CD4-positive, alpha-beta memory T cell (primary cell): ENCODE measurements at regions of chr7 and their contacts with region 1.

Region 1: DNA sequence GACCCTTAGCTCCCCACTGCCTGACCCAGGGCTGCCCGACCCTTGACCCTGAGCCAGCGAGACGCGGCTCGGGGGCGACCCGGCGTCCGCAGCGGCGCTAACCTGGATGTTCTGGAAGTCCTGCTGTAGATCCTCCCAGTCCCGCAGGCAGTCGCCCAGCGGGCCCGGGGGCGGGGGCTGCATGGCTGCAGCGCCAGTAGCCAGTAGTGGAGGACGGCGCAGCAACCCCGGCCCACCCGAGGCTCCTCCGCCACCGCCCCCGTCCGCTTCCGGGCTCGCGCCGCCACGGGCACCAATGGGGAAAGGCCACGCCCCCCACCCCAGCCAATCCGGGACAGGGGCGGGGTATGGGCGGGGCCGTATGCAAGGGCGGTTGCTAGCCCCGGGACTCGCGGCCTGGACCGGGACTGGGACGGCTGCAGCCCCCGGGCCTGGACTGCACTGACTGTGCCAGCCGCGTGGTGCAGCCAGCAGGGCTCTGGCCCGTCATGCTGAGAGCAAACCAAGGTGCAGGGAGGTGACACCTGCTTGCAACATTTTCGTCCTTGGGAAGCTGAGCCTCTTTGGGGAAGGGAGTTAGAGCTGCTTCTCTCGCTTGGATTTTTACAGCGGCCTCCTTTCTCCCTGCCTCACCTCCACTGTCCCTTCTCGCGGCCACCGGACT is at the start of gene TMEM120A:
- DNase-seq: peak; percentile 90 to 93 (median 91)
- H3K4me3 ChIP-seq: peak within 1 kb of the TSS; percentile 28 to 92
- H3K4me3 Mint-ChIP-seq: peak within 1 kb of the TSS; percentile 66 to 82 (median 78)
- H3K27ac ChIP-seq: peak within 1 kb of the TSS; percentile 62
- H3K27ac Mint-ChIP-seq: peak within 1 kb of the TSS in 4 of 7 donors; percentile 15 to 81 (median 44)
- H3K4me1 ChIP-seq: peaks cover 26% of the 10 kb centered on the region
- H3K4me1 Mint-ChIP-seq: peaks cover 17 to 45% (median 29%) of the 10 kb centered on the region in 4 donors
- H3K27me3 ChIP-seq: no peaks in the 10 kb centered on the region
- H3K27me3 Mint-ChIP-seq: no peaks in the 10 kb centered on the region
- total RNA-seq, gene TMEM120A: 27.4 to 31.2 TPM

Region 2: GRCh38 chr7:75866489-75867389 is 127.8 kb before region 1 on chr7:
- CTCF ChIA-PET with region 1: interaction called, 3 read pairs
- POLR2A ChIA-PET with region 1: no interaction called
- intact Hi-C with region 1: loop called (anchors 1 kb)
- DNase-seq: peak in 4 of 5 donors; percentile 36 to 44 (median 41)
- H3K4me3 ChIP-seq: no peak overlapping the region
- H3K4me3 Mint-ChIP-seq: no peak overlapping the region
- H3K27ac ChIP-seq: no peak overlapping the region
- H3K27ac Mint-ChIP-seq: no peak overlapping the region
- H3K4me1 ChIP-seq: no peaks in the 10 kb centered on the region
- H3K4me1 Mint-ChIP-seq: peaks cover 5 to 10% (median 8%) of the 10 kb centered on the region in 4 donors
- H3K27me3 ChIP-seq: no peaks in the 10 kb centered on the region
- H3K27me3 Mint-ChIP-seq: peaks cover 7 to 12% of the 10 kb centered on the region in 2 donors

Region 3: DNA sequence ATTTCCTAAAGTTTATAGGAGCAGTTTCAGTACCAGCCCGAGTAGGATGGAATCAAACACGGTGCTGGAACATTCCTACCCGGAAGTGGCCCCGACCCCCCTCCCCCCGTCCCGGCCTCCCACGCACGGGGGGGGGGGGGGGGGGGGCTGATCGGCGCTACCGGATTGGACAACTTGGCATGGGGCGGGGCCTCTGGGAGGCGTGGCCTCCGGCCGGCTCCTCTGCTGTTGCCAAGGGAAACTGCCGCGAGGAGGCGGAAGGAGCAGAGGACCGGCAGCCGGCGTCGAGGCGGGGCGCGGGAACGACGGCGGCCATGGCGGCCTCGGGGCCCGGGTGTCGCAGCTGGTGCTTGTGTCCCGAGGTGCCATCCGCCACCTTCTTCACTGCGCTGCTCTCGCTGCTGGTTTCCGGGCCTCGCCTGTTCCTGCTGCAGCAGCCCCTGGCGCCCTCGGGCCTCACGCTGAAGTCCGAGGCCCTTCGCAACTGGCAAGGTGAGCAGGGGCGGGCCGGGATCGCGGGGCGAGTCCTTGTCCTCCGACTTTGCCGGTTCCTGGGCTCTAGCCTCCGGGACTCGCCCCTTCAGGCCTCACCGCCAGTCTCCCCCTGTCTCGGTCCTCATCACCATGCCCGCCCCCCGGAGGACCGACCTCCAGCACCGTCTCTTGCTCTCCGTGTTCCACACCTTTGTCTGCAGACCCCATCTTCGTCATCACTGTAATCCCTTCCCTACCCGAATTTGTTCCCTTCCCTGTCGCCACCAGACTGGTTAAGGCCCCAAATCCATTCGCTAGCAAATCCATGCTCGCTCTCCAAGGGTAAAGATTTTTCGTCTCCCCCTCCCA is 115.5 kb before region 1 on chr7 and contains the start of gene RHBDD2:
- CTCF ChIA-PET with region 1: no interaction called
- POLR2A ChIA-PET with region 1: interaction called, 12 read pairs
- intact Hi-C with region 1: loop called (anchors 1 kb)
- DNase-seq: peak; percentile 90 to 96 (median 93)
- H3K4me3 ChIP-seq: peak within 1 kb of the TSS; percentile 89 to 94
- H3K4me3 Mint-ChIP-seq: peak within 1 kb of the TSS; percentile 91 to 99 (median 98)
- H3K27ac ChIP-seq: peak within 1 kb of the TSS; percentile 91
- H3K27ac Mint-ChIP-seq: peak within 1 kb of the TSS; percentile 96 to 100 (median 98)
- H3K4me1 ChIP-seq: peaks cover 25% of the 10 kb centered on the region
- H3K4me1 Mint-ChIP-seq: peaks cover 23 to 39% (median 32%) of the 10 kb centered on the region in 4 donors
- H3K27me3 ChIP-seq: no peaks in the 10 kb centered on the region
- H3K27me3 Mint-ChIP-seq: no peaks in the 10 kb centered on the region
- total RNA-seq, gene RHBDD2: 47.1 to 53.2 TPM

Region 4: DNA sequence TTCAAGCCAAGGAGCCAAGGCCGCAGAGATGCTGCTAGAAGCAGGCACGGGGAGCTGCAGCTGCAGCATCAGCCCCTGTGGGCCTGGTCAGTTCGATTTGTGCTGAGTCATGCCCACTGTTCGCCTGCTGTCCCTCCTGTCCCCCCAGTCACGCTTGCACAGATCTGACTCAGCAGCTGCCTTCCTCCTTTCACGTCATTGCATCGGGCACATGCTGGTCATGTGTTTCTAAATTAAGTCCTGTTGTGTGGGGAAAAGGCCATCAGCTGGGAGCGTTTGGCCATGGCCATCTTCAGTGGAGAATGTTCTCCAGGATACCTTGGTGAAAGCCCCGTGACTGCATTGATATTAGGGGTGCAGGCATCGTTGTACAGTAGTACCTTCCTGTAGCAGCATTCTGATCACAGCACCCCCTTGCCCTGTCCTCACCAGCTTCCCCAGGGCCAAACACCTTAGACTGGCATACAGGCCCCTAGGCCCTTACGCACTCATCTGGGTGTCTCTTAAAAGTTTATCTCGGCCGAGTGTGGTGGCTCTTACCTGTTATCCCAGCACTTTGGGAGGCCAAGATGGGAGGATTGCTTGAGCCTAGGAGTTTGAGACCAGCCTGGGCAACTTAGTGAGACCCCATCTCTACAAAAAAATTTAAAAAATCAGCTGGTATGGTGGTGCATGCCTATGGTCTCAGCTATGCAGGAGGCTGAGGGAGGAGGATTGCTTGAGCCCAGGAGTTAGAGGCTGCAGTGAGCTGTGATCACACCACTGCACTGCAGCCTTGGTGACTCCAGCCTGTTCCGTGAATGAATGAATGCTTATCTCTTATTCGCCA is 56.3 kb before region 1 on chr7:
- CTCF ChIA-PET with region 1: no interaction called
- POLR2A ChIA-PET with region 1: no interaction called
- intact Hi-C with region 1: no loop called
- DNase-seq: no peak
- H3K4me3 ChIP-seq: no peak overlapping the region
- H3K4me3 Mint-ChIP-seq: no peak overlapping the region
- H3K27ac ChIP-seq: no peak overlapping the region
- H3K27ac Mint-ChIP-seq: no peak overlapping the region
- H3K4me1 ChIP-seq: no peaks in the 10 kb centered on the region
- H3K4me1 Mint-ChIP-seq: peaks cover 0 to 9% (median 5%) of the 10 kb centered on the region in 4 donors
- H3K27me3 ChIP-seq: no peaks in the 10 kb centered on the region
- H3K27me3 Mint-ChIP-seq: no peaks in the 10 kb centered on the region

Region 5: GRCh38 chr7:76011442-76011861 is 16.9 kb after region 1 on chr7:
- CTCF ChIA-PET with region 1: interaction called, 5 read pairs
- POLR2A ChIA-PET with region 1: interaction called, 9 read pairs
- intact Hi-C with region 1: loop called (anchors 1 kb)
- DNase-seq: no peak
- H3K4me3 ChIP-seq: no peak overlapping the region
- H3K4me3 Mint-ChIP-seq: peak overlapping the region in 2 of 8 donors; percentile 30 to 35
- H3K27ac ChIP-seq: no peak overlapping the region
- H3K27ac Mint-ChIP-seq: no peak overlapping the region
- H3K4me1 ChIP-seq: peaks cover 29% of the 10 kb centered on the region
- H3K4me1 Mint-ChIP-seq: peaks cover 24 to 35% (median 30%) of the 10 kb centered on the region in 4 donors
- H3K27me3 ChIP-seq: no peaks in the 10 kb centered on the region
- H3K27me3 Mint-ChIP-seq: no peaks in the 10 kb centered on the region

Region 6: DNA sequence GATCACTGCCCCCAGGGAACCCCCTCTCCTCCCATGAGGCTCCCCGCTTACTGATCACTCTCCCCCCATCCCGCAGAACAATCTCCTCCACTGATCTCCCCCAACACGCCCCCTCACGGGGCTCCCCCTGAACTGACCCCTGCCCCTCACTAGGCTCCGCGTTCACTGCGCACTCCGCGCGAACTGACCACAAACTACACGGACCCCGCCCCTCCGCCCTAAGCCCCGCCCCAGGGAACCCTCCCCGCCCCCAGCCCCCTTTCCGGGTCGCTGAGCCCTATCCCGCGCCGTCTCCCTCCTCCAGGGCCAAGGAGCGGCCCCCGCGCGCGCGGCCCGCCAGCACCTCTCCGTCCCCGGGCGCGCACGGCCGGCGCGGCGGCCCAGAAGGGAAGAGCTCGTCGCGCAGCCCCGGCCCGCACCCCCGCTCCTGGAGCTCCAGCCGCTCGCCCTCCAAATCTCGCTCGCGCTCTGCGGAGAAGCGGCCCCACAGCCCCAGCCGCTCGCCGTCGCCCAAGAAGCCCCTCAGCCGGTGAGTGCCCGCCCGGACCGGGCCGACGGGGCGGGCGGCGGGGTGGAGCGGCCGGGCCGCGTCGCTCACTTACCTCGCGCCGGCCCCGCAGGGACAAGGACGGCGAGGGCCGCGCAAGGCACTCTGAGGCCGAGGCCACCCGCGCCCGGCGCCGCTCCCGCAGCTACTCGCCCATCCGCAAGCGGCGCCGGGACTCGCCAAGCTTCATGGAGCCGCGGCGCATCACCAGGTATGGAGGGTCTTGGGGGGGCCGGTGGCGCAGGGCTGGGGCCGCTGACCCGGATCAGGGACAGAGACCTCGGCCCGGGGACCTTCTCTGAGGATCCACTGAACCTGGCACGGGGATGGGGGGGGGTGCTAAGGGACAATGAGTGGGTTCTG is 288.1 kb after region 1 on chr7:
- CTCF ChIA-PET with region 1: no interaction called
- POLR2A ChIA-PET with region 1: no interaction called
- intact Hi-C with region 1: no loop called
- DNase-seq: no peak
- H3K4me3 ChIP-seq: peak overlapping the region in 1 of 2 donors; percentile 14
- H3K4me3 Mint-ChIP-seq: peak overlapping the region in 7 of 8 donors; percentile 73 to 86 (median 81)
- H3K27ac ChIP-seq: no peak overlapping the region
- H3K27ac Mint-ChIP-seq: no peak overlapping the region
- H3K4me1 ChIP-seq: peaks cover 13% of the 10 kb centered on the region
- H3K4me1 Mint-ChIP-seq: peaks cover 6 to 17% (median 15%) of the 10 kb centered on the region in 4 donors
- H3K27me3 ChIP-seq: peaks cover 16% of the 10 kb centered on the region
- H3K27me3 Mint-ChIP-seq: peaks cover 20 to 25% of the 10 kb centered on the region in 2 donors